Endothelial cell of umbilical vein (primary cell): ENCODE measurements at regions of chr3 and their contacts with region 1.

Region 1: DNA sequence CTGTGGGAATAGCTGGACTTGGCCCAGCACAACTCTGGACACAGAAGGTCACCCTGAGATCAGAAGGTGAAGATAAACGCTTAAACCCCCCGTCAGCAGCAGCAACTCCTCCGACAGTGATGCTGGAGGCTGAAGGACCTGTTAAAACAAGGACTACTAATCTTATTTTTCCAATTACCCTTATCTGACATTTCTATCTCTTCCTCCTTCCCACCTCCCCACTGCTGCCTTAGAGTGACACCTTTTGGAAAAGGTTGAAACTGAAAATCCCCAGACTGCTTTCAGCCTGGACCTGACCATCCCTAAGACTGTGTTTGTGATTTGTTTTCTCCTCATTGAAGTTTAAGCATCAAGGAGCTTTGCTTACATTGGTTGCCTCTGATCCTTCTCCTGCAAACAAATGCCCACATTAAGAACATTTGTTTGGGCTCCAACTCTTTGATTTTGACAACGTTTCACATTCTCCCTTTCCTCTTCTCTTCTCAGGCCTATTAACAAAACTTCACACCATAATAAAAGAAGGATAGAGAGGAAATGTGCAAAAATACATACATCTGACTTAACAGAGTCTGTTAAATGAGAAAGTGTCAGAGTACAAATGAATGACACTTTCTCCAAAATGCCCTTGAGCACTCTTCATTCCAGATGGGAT is 410.6 kb upstream of the WNT5A start:
- DNase-seq: peak; percentile 34
- H3K4me3 ChIP-seq: no peak overlapping the region
- H3K27ac ChIP-seq: no peak overlapping the region
- H3K4me1 ChIP-seq: peaks cover 12% of the 10 kb centered on the region
- H3K27me3 ChIP-seq: no peaks in the 10 kb centered on the region
- CTCF ChIP-seq: peak; percentile 10 to 13
- POLR2A ChIP-seq: no peak

Region 2: DNA sequence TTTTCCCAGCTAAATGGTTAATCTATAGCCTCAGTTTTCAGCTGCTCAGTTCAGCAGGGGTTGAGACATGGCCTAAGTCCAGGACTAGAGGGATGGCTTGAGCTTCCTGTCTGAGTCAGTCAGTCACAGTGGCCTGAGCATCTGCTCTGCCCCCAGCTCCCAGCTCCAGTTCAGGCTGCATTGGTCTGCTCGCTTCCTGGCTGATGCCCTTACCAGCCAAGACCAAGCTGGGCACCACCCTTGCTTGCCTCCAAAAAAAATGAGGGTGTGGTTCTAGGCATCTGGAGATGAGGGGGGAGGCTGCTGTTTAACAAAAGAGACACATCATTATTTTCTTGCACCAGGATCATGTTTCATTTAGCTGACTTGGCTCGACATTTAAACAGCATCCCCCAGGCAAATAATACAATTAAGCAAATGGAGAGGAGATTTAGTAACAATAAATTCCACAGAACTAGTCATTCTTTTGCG is 481.3 kb before region 1 on chr3:
- CTCF ChIA-PET with region 1: no interaction called
- POLR2A ChIA-PET with region 1: no interaction called
- dilution Hi-C with region 1: no loop called
- intact Hi-C with region 1: no loop called
- DNase-seq: no peak
- H3K4me3 ChIP-seq: no peak overlapping the region
- H3K27ac ChIP-seq: no peak overlapping the region
- H3K4me1 ChIP-seq: no peaks in the 10 kb centered on the region
- H3K27me3 ChIP-seq: no peaks in the 10 kb centered on the region
- CTCF ChIP-seq: no peak
- POLR2A ChIP-seq: no peak

Region 3: DNA sequence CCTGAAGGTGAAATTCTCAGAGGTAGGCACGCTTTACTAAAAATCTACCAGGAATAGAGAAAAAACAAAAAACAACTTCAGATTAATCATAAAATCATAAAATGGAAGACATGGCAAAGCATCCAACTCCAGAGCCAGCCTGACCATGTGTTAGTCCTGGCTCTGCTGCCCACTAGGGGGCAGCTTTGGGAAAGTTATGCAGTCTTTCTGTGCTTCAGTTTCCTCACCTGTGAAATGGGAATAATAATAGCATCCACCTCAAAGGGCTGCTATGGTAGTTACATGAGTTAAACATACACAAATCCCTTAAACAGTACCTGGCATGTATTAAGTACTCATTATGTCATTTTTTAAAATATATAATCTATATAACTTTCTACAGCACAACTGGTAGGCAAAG is 462.9 kb before region 1 on chr3:
- CTCF ChIA-PET with region 1: no interaction called
- POLR2A ChIA-PET with region 1: no interaction called
- dilution Hi-C with region 1: no loop called
- intact Hi-C with region 1: loop called (anchors 1 kb)
- DNase-seq: no peak
- H3K4me3 ChIP-seq: no peak overlapping the region
- H3K27ac ChIP-seq: no peak overlapping the region
- H3K4me1 ChIP-seq: no peaks in the 10 kb centered on the region
- H3K27me3 ChIP-seq: no peaks in the 10 kb centered on the region
- CTCF ChIP-seq: peak; percentile 40 to 46
- POLR2A ChIP-seq: no peak

Region 4: DNA sequence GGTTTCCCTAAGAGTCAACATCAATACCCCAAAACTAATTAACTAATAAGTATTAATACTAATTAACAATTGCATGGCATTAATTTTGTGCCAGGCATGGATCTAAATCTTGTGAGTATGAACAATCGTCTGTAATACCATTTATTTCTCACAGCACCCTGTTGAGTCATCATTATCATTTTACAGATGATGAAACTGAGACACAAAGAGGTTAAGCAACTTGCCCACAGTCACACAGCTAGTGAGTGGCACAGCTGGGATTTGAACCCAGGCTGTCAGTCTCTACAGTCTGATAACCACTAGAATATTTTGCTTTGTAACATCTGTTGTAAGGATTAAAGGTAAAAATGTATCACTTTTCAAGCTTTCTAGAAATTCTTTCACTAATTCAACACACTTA is 12.8 kb after region 1 on chr3:
- CTCF ChIA-PET with region 1: no interaction called
- POLR2A ChIA-PET with region 1: no interaction called
- dilution Hi-C with region 1: no loop called
- intact Hi-C with region 1: no loop called
- DNase-seq: no peak
- H3K4me3 ChIP-seq: no peak overlapping the region
- H3K27ac ChIP-seq: no peak overlapping the region
- H3K4me1 ChIP-seq: no peaks in the 10 kb centered on the region
- H3K27me3 ChIP-seq: no peaks in the 10 kb centered on the region
- CTCF ChIP-seq: no peak
- POLR2A ChIP-seq: no peak

Region 5: DNA sequence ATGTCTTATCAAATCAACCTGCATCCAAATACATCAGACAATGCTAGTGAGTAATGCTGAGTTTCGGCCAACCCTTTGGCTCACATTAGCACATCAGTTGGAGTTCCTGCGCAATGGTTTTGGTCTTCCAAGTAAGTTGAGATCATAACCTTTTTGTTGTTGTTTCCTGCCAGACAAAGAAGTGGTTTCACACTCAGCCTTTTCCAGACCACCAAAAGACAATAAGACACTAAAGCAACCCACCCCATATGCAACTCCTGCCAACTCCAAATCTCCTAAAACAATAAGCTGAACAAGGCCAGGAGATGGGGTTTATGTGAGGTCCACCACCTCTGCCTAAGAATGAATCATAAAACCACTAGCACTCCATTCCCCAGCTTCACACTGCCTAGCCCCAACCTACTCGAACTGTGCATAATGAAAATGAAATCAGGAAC is 393.6 kb after region 1 on chr3:
- CTCF ChIA-PET with region 1: no interaction called
- POLR2A ChIA-PET with region 1: no interaction called
- dilution Hi-C with region 1: no loop called
- intact Hi-C with region 1: loop called (anchors 2 kb)
- DNase-seq: peak; percentile 98
- H3K4me3 ChIP-seq: no peak overlapping the region
- H3K27ac ChIP-seq: peak overlapping the region; percentile 90
- H3K4me1 ChIP-seq: peaks cover 24% of the 10 kb centered on the region
- H3K27me3 ChIP-seq: no peaks in the 10 kb centered on the region
- CTCF ChIP-seq: no peak
- POLR2A ChIP-seq: no peak